A549 (cell line): ENCODE measurements at regions of chr2 and their contacts with region 1.

Region 1: DNA sequence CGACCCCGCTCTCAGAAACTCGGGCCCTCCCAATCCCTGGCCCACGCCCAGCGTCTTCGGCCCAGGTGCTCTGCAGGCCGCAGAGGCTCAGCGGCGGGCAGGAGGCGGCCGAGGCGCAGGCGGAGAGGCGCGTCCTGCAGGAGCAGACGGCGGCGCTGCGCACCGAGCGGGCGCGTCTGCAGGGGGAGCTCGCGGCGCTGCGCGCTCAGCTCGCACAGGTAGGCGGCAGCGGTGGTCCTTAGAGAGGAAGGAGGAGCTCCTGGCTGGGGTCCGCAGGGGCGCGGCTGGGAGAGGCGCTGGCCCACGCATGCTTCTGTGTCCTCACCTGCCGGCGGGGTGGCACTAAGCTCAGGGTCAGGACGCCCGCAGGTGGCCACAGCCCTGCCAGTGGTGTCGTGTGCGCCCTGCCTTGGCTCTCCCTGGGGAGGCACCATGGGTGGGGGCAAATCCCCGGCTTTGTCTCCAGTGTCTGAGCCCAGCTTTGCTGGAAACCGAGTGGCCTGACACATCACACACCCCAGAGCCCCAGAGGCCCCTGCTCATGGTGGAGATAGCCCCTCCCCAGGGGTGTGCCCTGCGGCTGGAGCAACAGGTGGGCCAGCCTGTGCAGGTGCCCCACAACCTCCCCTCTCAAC is 14.9 kb upstream of the SNED1 start:
- DNase-seq: peak; percentile 13 to 75
- ATAC-seq: peak; percentile 91 to 96
- H3K4me3 ChIP-seq: 0 out of 3 replicates have a peak overlapping the region, but pooled peaks have one; percentile 26
- H3K27ac ChIP-seq: no peak overlapping the region
- H3K4me1 ChIP-seq: peaks cover 27% of the 10 kb centered on the region
- CTCF ChIP-seq: peak; percentile 64
- EP300 ChIP-seq: no peak
- POLR2A ChIP-seq: no peak
- RAD21 ChIP-seq: peak in 1 of 2 experiments; percentile 45; a peak in 3 of 5 replicates

Region 2: GRCh38 chr2:240972636-240973521 is 10.6 kb before region 1 on chr2:
- CTCF ChIA-PET with region 1: interaction called, 10 read pairs
- POLR2A ChIA-PET with region 1: no interaction called
- DNase-seq: no peak
- ATAC-seq: no peak
- H3K4me3 ChIP-seq: no peak overlapping the region
- H3K27ac ChIP-seq: no peak overlapping the region
- H3K4me1 ChIP-seq: no peaks in the 10 kb centered on the region
- CTCF ChIP-seq: no peak
- EP300 ChIP-seq: no peak
- POLR2A ChIP-seq: no peak
- RAD21 ChIP-seq: no peak